Activated T-helper 1 cell treated with anti-CD3 and anti-CD28 coated beads, Interleukin-12 subunit alpha, Interleukin-12 subunit beta, Interleukin-2, Interleukin-4 antibody, amounts not matched to agents 30 ng/mL and 10 ng/mL and 1 ng/mL, durations not matched to agents 14 hours and 24 hours and 36 hours (primary cell): ENCODE measurements at regions of chr12 and their contacts with region 1.

Region 1: GRCh38 chr12:68451261-68452077 is 119.3 kb upstream of the MDM1 start:
- DNase-seq: peak; percentile 53
- H3K4me3 Mint-ChIP-seq: peak overlapping the region; percentile 73
- H3K27ac Mint-ChIP-seq: peak overlapping the region; percentile 97
- H3K4me1 Mint-ChIP-seq: peaks cover 99% of the 10 kb centered on the region
- H3K27me3 Mint-ChIP-seq: no peaks in the 10 kb centered on the region

Region 2: GRCh38 chr12:68279227-68280054 is 172.0 kb before region 1 on chr12:
- intact Hi-C with region 1: loop called (anchors 5 kb)
- DNase-seq: no peak
- H3K4me3 Mint-ChIP-seq: no peak overlapping the region
- H3K27ac Mint-ChIP-seq: peak overlapping the region; percentile 45
- H3K4me1 Mint-ChIP-seq: peaks cover 61% of the 10 kb centered on the region
- H3K27me3 Mint-ChIP-seq: no peaks in the 10 kb centered on the region

Region 3: GRCh38 chr12:68374307-68374982 is 77.0 kb before region 1 on chr12:
- intact Hi-C with region 1: loop called (anchors 1 kb)
- DNase-seq: peak; percentile 60
- H3K4me3 Mint-ChIP-seq: peak overlapping the region; percentile 31
- H3K27ac Mint-ChIP-seq: peak overlapping the region; percentile 93
- H3K4me1 Mint-ChIP-seq: peaks cover 68% of the 10 kb centered on the region
- H3K27me3 Mint-ChIP-seq: no peaks in the 10 kb centered on the region

Region 4: DNA sequence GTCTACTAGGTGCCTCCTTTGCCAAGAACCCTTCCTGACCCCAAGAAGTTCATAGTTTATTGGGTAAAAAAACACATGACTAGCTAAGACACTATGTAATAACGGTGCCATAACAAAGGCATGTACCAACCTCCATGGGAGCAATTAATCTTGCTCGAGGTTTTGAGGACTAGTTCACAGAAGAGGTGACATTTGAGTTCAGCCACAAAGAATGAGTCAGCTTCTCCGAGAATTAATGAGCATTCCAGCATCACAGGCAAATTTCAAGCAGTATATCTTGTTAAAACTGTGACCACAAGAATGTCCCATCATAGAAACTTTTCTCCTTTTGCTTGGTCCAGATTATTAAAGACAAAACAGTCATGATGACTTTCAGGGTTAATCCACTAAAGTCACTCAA is 46.2 kb after region 1 on chr12:
- intact Hi-C with region 1: loop called (anchors 1 kb)
- DNase-seq: no peak
- H3K4me3 Mint-ChIP-seq: peak overlapping the region; percentile 66
- H3K27ac Mint-ChIP-seq: peak overlapping the region; percentile 94
- H3K4me1 Mint-ChIP-seq: peaks cover 40% of the 10 kb centered on the region
- H3K27me3 Mint-ChIP-seq: no peaks in the 10 kb centered on the region

Region 5: GRCh38 chr12:68610370-68611093 is 159.1 kb after region 1 on chr12 and contains the start of gene RAP1B:
- intact Hi-C with region 1: loop called (anchors 1 kb)
- DNase-seq: peak; percentile 89
- H3K4me3 Mint-ChIP-seq: peak within 1 kb of the TSS; percentile 96
- H3K27ac Mint-ChIP-seq: peak within 1 kb of the TSS; percentile 96
- H3K4me1 Mint-ChIP-seq: peaks cover 52% of the 10 kb centered on the region
- H3K27me3 Mint-ChIP-seq: no peaks in the 10 kb centered on the region
- total RNA-seq, gene RAP1B: 244 and 263 TPM in 2 replicates

Region 6: GRCh38 chr12:68745904-68746571 is 294.6 kb after region 1 on chr12 and contains the start of gene SLC35E3:
- intact Hi-C with region 1: loop called (anchors 5 kb)
- DNase-seq: peak; percentile 91
- H3K4me3 Mint-ChIP-seq: peak within 1 kb of the TSS; percentile 94
- H3K27ac Mint-ChIP-seq: peak within 1 kb of the TSS; percentile 87
- H3K4me1 Mint-ChIP-seq: peaks cover 50% of the 10 kb centered on the region
- H3K27me3 Mint-ChIP-seq: no peaks in the 10 kb centered on the region
- total RNA-seq, gene SLC35E3: 5.9 and 6.3 TPM in 2 replicates